Gastrocnemius medialis (tissue), 4 donors: ENCODE measurements at regions of chr9 and their contacts with region 1.

Region 1: DNA sequence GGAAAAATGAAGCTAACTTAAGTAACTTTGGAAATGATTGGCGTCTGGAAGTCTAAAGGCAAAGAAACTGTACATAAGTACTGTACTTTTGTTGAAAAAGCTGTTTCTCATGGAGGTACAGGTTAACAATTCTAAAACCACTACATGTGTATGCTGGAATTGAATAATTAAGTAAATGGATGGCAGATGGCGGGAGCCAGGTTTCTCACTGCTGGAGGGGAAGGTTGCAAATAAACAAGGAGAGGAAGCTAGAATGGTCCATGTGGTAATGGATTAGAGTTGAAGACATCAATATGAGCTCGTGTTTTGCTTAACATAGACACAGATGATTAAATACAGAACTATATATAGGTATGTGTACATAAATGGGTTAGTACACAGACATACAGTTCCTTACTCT is 43.2 kb upstream of the ASTN2 start:
- DNase-seq: no peak
- ATAC-seq: no peak
- H3K4me3 ChIP-seq: no peak overlapping the region
- H3K27ac ChIP-seq: no peak overlapping the region
- H3K4me1 ChIP-seq: no peaks in the 10 kb centered on the region
- H3K27me3 ChIP-seq: no peaks in the 10 kb centered on the region
- CTCF ChIP-seq: no peak
- POLR2A ChIP-seq: no peak

Region 2: DNA sequence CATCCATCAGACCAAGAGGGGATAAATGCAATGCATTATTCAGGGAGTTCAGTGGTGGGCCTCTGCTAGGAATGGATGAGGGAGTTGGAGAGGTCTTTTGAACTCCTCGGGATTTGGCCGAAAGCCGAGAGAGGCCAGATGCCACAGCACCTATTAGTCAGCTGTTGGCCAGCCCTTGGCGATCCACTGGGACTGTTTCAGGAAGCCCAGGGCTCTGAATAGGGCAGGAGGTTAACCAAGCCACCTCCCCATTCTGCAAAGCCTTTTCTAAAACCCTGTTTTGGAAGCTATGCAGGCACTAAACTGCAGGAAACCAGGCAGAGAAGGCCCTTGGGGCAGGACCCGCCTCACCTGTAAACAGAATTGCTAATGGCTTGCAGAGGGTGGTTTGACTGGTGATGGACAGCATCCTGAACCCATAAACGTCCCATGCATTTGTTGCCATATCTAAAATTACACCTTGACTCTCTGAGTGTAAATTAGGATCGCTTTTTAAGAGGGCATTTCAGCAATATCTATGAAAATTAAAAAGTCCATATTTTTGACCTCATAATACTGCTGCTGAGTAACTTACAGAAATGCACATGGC is 80.9 kb before region 1 on chr9:
- in situ Hi-C with region 1: no loop called
- intact Hi-C with region 1: no loop called
- DNase-seq: no peak
- ATAC-seq: no peak
- H3K4me3 ChIP-seq: no peak overlapping the region
- H3K27ac ChIP-seq: no peak overlapping the region
- H3K4me1 ChIP-seq: no peaks in the 10 kb centered on the region
- H3K27me3 ChIP-seq: no peaks in the 10 kb centered on the region
- CTCF ChIP-seq: no peak
- POLR2A ChIP-seq: no peak

Region 3: DNA sequence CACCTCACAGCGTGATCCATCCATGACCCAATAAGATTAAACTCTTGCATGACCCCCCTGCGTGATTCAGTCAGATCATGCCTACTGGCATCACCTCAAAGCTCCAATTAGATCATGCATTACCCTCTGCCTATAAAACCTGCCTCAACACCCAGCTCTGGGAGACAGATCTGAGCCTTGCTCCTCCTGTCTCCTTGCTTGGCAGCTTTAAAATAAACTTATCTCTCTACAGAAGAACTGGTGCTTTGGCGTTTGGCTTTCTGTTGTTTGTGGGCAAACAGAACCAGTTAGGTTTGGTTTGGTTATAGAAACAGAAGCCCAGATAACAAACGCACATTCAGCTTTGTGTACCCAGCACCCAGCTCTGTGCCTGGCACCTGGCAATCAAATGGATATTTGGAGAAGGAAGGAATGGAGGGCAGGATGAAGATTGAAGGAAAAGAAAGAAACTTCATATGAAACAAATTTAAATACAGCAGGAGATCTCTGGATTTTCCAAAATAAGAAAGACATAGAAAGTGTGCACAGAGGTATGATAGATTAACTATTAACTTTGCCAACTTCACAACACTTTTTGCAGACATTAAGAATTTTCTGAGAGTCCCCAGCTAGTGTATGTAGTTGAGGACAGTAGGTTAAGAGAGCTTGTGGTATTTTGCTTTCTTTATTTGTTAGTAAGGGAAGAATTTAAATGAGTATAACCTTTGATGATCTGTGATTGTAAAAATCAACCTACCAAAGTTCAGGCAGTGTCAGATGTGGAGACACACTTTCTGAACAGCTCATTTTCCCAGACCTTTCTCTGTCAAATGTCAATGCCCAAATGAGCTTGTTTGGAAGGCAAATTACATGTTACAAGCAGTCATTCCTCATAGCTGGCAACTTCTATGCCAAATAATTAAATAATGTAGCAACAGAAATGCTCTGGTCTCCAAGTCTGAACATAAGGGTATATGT is 58.9 kb after region 1 on chr9:
- in situ Hi-C with region 1: loop called in 1 of 4 experiments (anchors 10 kb)
- intact Hi-C with region 1: no loop called
- DNase-seq: no peak
- ATAC-seq: no peak
- H3K4me3 ChIP-seq: no peak overlapping the region
- H3K27ac ChIP-seq: no peak overlapping the region
- H3K4me1 ChIP-seq: no peaks in the 10 kb centered on the region
- H3K27me3 ChIP-seq: no peaks in the 10 kb centered on the region
- CTCF ChIP-seq: no peak
- POLR2A ChIP-seq: no peak